Activated CD4-positive, alpha-beta memory T cell treated with anti-CD3 and anti-CD28 coated beads for 36 hours (primary cell): ENCODE measurements at regions of chr13 and their contacts with region 1.

Region 1: GRCh38 chr13:111066544-111066943 is 48.6 kb upstream of the ARHGEF7 start:
- DNase-seq: no peak
- H3K4me3 Mint-ChIP-seq: peak overlapping the region; percentile 49
- H3K27ac Mint-ChIP-seq: no peak overlapping the region
- H3K4me1 Mint-ChIP-seq: peaks cover 8% of the 10 kb centered on the region
- H3K27me3 Mint-ChIP-seq: peaks cover 39% of the 10 kb centered on the region

Region 2: DNA sequence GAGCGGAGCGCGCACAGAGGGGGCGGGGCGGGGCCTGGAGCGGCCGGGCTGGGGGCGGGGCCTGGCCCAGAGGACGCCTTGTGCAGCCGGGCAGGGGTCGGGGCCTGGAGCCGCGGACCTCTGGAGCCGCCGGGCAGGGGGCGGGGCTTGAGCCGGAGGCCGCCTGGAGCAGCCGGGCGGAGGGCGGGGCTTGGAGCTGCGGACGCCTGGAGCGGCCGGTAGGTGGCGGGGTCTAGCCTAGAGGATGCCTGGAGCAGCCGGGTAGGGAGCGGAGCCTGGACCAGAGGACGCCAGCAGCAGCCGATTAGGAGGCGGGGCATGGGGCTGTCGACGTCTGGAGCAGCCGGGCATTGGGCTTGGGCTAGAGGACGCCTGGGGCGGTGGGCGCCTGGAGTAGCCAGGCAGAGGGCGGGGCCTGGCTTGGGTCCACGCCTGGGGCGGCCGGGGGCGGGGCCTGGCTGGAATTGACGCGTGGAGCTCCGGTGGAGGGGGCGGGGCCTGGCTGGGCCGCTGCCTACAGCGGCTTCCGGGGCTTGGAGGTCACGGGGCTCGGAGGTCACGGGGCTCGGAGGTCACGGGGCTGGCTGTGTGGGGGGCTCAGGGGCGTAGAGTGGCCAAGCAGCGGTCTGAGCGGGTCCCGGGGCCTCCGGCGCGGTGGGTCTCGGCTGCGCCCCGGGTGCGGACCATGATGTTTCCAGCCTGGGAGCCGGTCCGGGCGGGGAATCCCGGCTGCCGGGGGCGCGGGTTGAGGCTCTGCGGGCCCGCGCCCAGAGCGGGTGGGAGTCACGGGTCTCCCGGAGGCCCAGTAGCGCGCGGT is 151.3 kb before region 1 on chr13 and contains the start of gene ANKRD10:
- CTCF ChIA-PET with region 1: interaction called, 12 read pairs
- POLR2A ChIA-PET with region 1: no interaction called
- intact Hi-C with region 1: no loop called
- DNase-seq: peak; percentile 98
- H3K4me3 Mint-ChIP-seq: peak within 1 kb of the TSS; percentile 87
- H3K27ac Mint-ChIP-seq: peak within 1 kb of the TSS; percentile 94
- H3K4me1 Mint-ChIP-seq: peaks cover 46% of the 10 kb centered on the region
- H3K27me3 Mint-ChIP-seq: no peaks in the 10 kb centered on the region
- total RNA-seq, gene ANKRD10: 83.9 to 97.8 TPM

Region 3: GRCh38 chr13:111031531-111031961 is 35.0 kb before region 1 on chr13:
- CTCF ChIA-PET with region 1: interaction called, 10 read pairs
- POLR2A ChIA-PET with region 1: no interaction called
- intact Hi-C with region 1: no loop called
- DNase-seq: peak; percentile 69
- H3K4me3 Mint-ChIP-seq: no peak overlapping the region
- H3K27ac Mint-ChIP-seq: no peak overlapping the region
- H3K4me1 Mint-ChIP-seq: peaks cover 10% of the 10 kb centered on the region
- H3K27me3 Mint-ChIP-seq: peaks cover 24% of the 10 kb centered on the region

Region 4: DNA sequence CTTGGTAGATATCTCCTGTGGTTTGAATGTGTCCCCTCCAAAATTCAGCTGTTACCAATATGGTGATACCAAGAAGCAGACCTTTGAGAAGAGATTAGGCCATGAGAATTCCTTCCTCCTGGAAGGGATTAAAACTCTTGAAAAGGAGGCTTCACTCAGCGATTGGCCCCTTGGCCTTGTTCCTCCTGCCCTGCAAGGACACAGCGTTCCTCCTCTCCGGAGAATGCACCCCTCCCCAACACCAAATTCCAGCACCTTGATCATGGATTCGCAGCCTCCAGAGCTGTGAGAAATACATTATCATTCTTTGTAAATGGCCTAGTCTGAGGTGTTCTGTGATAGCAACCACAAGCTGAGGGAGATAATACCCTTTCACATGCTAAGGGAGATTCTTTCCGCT is 14.1 kb after region 1 on chr13:
- CTCF ChIA-PET with region 1: interaction called, 11 read pairs
- POLR2A ChIA-PET with region 1: no interaction called
- intact Hi-C with region 1: no loop called
- DNase-seq: no peak
- H3K4me3 Mint-ChIP-seq: no peak overlapping the region
- H3K27ac Mint-ChIP-seq: no peak overlapping the region
- H3K4me1 Mint-ChIP-seq: no peaks in the 10 kb centered on the region
- H3K27me3 Mint-ChIP-seq: peaks cover 15% of the 10 kb centered on the region

Region 5: DNA sequence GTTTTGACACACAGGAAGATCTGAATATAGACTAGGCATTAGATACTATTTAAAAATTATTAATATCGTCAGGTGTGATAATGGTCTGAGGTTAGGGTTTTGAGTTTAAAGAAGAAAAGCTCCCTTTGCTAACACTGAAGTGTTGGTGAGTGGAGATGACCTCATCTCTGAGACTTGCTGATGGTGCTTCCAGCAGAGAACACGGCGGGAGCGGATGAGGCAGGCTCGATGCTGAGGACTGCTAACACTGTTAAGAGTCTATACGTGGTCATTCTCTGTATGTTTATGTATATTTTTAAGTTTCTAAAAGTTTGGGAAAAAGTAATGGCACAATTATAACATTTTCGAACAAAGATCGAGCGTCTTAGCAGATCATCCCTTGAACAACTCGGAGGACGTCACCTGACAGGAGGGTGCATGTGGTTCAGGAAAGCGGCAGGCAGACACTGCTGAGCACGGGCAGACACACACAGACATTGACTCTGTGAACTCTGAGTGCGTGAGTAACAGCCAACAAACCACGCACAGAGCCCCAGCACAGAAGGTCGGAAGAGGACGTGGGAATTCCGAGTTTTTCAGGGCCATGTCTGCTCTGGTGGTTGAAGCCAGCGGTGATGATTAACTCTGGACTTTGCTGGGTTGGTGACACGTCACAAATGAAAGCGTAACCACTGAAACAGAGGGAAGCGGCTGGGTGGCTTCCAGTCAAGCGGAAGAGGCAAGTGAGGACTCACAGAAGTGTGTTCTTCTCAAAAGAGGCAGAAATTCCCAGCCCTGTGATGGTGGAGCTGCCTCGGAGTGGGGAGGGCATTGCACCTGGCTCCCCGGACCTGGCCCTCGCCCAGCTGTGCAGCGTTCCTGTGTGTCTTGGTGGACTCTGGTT is 162.0 kb after region 1 on chr13:
- CTCF ChIA-PET with region 1: interaction called, 55 read pairs
- POLR2A ChIA-PET with region 1: no interaction called
- intact Hi-C with region 1: loop called (anchors 1 kb)
- DNase-seq: no peak
- H3K4me3 Mint-ChIP-seq: no peak overlapping the region
- H3K27ac Mint-ChIP-seq: no peak overlapping the region
- H3K4me1 Mint-ChIP-seq: peaks cover 15% of the 10 kb centered on the region
- H3K27me3 Mint-ChIP-seq: no peaks in the 10 kb centered on the region

Region 6: DNA sequence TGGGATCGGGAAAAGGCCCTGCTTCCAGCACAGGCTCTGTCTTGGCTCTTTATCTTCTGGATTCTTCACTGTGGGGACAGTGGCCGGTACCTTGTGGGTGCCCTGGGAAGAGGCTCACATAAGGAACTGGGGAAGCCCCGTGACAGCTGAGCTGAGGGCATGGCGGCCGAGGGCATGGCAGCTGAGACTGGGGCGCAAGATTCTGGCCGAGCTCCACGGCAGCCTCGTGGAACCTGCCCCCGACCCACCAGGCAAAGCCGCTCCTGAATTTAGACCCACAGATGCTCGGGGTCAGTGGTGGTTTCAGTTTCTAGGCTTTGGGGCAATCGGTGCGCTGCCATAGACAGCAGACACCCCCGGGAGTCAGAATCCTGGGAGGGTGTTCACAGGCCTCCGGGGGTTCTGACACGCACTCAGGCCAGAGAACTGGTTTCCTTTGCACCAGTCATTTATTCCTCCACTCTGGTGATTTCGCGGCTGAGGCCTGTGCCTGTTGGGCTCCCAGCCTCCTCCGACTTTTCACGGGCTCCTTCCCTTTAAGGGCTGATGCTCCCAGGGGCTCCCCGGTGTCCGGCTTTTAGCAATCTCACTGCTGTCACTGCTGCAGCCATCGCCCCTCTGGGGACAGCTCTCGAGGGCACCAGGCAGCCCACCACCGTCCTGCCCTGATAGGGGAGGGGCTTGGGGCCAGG is 371.5 kb after region 1 on chr13:
- CTCF ChIA-PET with region 1: interaction called, 11 read pairs
- POLR2A ChIA-PET with region 1: no interaction called
- intact Hi-C with region 1: no loop called
- DNase-seq: no peak
- H3K4me3 Mint-ChIP-seq: no peak overlapping the region
- H3K27ac Mint-ChIP-seq: no peak overlapping the region
- H3K4me1 Mint-ChIP-seq: no peaks in the 10 kb centered on the region
- H3K27me3 Mint-ChIP-seq: peaks cover 11% of the 10 kb centered on the region